ENCODE measurements at regions of chr6 and their contacts with region 1.

Region 1: GRCh38 chr6:15089555-15090144 is 156.2 kb upstream of the JARID2 start:
- DNase-seq: no peak
- ATAC-seq: peak; percentile 32

Region 2: DNA sequence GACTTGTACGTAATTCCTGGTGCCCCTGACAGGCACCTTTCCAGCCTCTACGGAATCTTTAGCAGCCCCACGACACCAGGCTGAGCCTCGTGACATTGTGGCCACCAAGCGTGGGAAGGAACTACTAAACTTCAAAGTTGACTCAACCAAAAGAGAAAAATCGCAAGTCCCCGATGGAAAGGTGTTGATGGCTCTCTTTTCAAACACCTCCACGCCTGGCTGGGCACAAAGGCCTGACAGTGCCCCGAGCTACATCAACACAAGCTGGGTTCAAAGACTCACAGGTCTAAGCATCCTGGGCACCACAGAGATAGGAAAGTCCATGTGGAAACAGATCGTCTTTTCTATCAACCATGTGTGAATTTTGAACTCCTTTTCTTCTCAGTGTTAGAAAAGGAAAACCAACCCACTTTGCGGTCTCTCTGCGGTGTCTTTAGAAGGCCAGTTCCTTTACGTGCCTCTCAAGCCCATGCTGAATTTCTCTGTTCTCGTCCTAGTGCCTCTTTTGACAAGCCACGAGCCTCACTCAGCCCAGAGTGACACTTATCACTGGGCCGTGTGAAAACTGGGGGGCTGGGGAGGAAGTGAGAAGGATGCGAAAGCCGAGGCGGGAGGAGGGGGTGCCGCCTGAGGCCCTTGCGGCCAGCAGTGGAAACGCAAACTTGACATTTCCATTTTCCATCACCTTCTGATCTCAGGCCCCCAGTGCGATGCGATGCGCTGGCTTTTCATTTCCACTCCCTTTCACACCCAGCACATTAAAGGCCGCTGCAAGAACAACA is 1661.7 kb before region 1 on chr6:
- intact Hi-C with region 1: no loop called
- DNase-seq: no peak
- ATAC-seq: peak; percentile 40

Region 3: GRCh38 chr6:14838017-14838631 is 251.5 kb before region 1 on chr6:
- intact Hi-C with region 1: loop called (anchors 5 kb)
- DNase-seq: no peak
- ATAC-seq: no peak

Measured in sciatic nerve (tissue), 2 donors.